ENCODE measurements at regions of chr6 and their contacts with region 1.

Region 1: GRCh38 chr6:138115877-138116660 is 8.8 kb upstream of the PERP start:
- DNase-seq: no peak
- H3K4me3 ChIP-seq: no peak overlapping the region
- H3K27ac ChIP-seq: no peak overlapping the region
- H3K4me1 ChIP-seq: peaks cover 0 to 8% (median 0%) of the 10 kb centered on the region in 3 donors
- H3K27me3 ChIP-seq: peaks cover 0 to 9% (median 0%) of the 10 kb centered on the region in 4 donors
- CTCF ChIP-seq: peak; percentile 61 to 85 (median 78)
- POLR2A ChIP-seq: no peak

Region 2: GRCh38 chr6:138287144-138287955 is 171.3 kb after region 1 on chr6:
- intact Hi-C with region 1: loop called (anchors 10 kb)
- DNase-seq: no peak
- H3K4me3 ChIP-seq: no peak overlapping the region
- H3K27ac ChIP-seq: no peak overlapping the region
- H3K4me1 ChIP-seq: no peaks in the 10 kb centered on the region
- H3K27me3 ChIP-seq: no peaks in the 10 kb centered on the region
- CTCF ChIP-seq: peak in 5 of 6 experiments; percentile 42 to 75 (median 54)
- POLR2A ChIP-seq: no peak

Region 3: GRCh38 chr6:138403801-138404661 is 288.0 kb after region 1 on chr6 and contains the start of gene HEBP2:
- intact Hi-C with region 1: loop called (anchors 10 kb)
- DNase-seq: peak; percentile 85
- H3K4me3 ChIP-seq: peak within 1 kb of the TSS; percentile 75 to 98 (median 88)
- H3K27ac ChIP-seq: peak within 1 kb of the TSS; percentile 94 to 99 (median 97)
- H3K4me1 ChIP-seq: peaks cover 8 to 52% (median 14%) of the 10 kb centered on the region in 3 donors
- H3K27me3 ChIP-seq: no peaks in the 10 kb centered on the region
- CTCF ChIP-seq: peak; percentile 40 to 67 (median 58)
- POLR2A ChIP-seq: peak in 3 of 4 donors; percentile 72 to 94 (median 85)
- total RNA-seq, gene HEBP2: 62.1 to 193 (median 90.8) TPM

Measured in esophagus squamous epithelium (tissue), 5 donors.